PC-3 (cell line): ENCODE measurements at regions of chr1 and their contacts with region 1.

Region 1: DNA sequence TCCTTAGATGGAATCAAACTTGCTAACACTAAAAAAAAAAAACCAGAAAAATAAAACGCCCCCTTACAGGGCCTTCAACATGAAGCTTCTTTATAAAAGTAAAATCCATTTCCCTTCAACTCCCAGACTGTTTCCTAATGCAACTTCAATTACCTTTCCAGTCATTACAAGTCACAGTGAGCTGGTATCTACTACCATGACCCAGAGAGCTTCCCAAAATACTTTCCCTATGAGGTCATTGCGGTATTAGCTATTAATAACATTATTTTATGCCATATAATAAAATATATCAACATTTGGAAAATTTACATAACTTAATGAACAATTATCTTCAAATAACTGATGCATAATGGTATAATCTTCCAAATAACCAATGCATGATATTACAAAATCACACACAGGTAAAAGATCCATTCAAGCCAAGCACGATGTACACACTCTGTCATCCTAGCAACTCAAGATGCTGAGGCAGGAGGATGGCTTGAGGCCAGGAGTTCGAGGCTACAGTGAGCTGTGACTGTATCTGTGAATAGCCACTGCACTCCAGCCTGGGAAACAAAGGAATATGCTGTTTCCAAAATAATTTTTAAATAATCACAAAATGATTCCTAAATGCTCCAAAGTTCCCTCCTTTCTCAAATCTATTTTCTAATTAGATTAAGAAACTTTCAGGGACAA is 24.1 kb downstream of the EIF4G3 start:
- DNase-seq: no peak
- ATAC-seq: no peak
- H3K4me3 ChIP-seq: no peak overlapping the region
- H3K27ac ChIP-seq: no peak overlapping the region
- H3K4me1 ChIP-seq: peaks cover 24% of the 10 kb centered on the region
- H3K27me3 ChIP-seq: no peaks in the 10 kb centered on the region
- CTCF ChIP-seq: no peak

Region 2: GRCh38 chr1:21184276-21184675 is 31.7 kb after region 1 on chr1:
- CTCF ChIA-PET with region 1: interaction called, 10 read pairs
- POLR2A ChIA-PET with region 1: no interaction called
- intact Hi-C with region 1: no loop called
- DNase-seq: no peak
- ATAC-seq: no peak
- H3K4me3 ChIP-seq: no peak overlapping the region
- H3K27ac ChIP-seq: no peak overlapping the region
- H3K4me1 ChIP-seq: no peaks in the 10 kb centered on the region
- H3K27me3 ChIP-seq: no peaks in the 10 kb centered on the region
- CTCF ChIP-seq: no peak

Region 3: GRCh38 chr1:21270086-21270689 is 117.6 kb after region 1 on chr1:
- CTCF ChIA-PET with region 1: no interaction called
- POLR2A ChIA-PET with region 1: no interaction called
- intact Hi-C with region 1: no loop called
- DNase-seq: peak; percentile 75
- ATAC-seq: peak; percentile 45; the same call in 1 of the 2 replicates
- H3K4me3 ChIP-seq: no peak overlapping the region
- H3K27ac ChIP-seq: no peak overlapping the region
- H3K4me1 ChIP-seq: peaks cover 14% of the 10 kb centered on the region
- H3K27me3 ChIP-seq: no peaks in the 10 kb centered on the region
- CTCF ChIP-seq: peak; percentile 95

Region 4: GRCh38 chr1:21534674-21535378 is 382.3 kb after region 1 on chr1:
- CTCF ChIA-PET with region 1: no interaction called
- POLR2A ChIA-PET with region 1: no interaction called
- intact Hi-C with region 1: no loop called
- DNase-seq: peak; percentile 73
- ATAC-seq: peak; percentile 88
- H3K4me3 ChIP-seq: no peak overlapping the region
- H3K27ac ChIP-seq: no peak overlapping the region
- H3K4me1 ChIP-seq: no peaks in the 10 kb centered on the region
- H3K27me3 ChIP-seq: peaks cover 12% of the 10 kb centered on the region
- CTCF ChIP-seq: peak; percentile 76